ENCODE measurements at regions of chr17 and their contacts with region 1.

Region 1: GRCh38 chr17:72120642-72121163 is at the start of gene SOX9:
- DNase-seq: peak; percentile 77 to 85
- H3K4me3 ChIP-seq: peak within 1 kb of the TSS; percentile 57 to 93 (median 72)
- H3K27ac ChIP-seq: no peak within 1 kb of the TSS
- H3K4me1 ChIP-seq: peaks cover 0 to 29% (median 21%) of the 10 kb centered on the region in 4 experiments; a peak in 6 of 7 replicates
- H3K27me3 ChIP-seq: peaks cover 31 to 68% (median 56%) of the 10 kb centered on the region in 4 experiments
- CTCF ChIP-seq: no peak
- EP300 ChIP-seq: no peak
- POLR2A ChIP-seq: peak in 1 of 2 experiments; percentile 80; a peak in 2 of 3 replicates
- RAD21 ChIP-seq: peak in 1 of 2 experiments; percentile 1; a peak in 1 of 4 replicates
- total RNA-seq, gene SOX9: 4.9 and 5.2 TPM in 2 replicates

Region 2: GRCh38 chr17:72030067-72030899 is 90.4 kb before region 1 on chr17:
- CTCF ChIA-PET with region 1: interaction called, 12 read pairs
- POLR2A ChIA-PET with region 1: no interaction called
- DNase-seq: peak; percentile 70 to 75
- H3K4me3 ChIP-seq: peak overlapping the region in 3 of 4 experiments; percentile 12 to 56 (median 25); a peak in 6 of 8 replicates
- H3K27ac ChIP-seq: no peak overlapping the region
- H3K4me1 ChIP-seq: peaks cover 0 to 6% (median 4%) of the 10 kb centered on the region in 4 experiments; a peak in 4 of 7 replicates
- H3K27me3 ChIP-seq: peaks cover 0 to 7% (median 3%) of the 10 kb centered on the region in 4 experiments; a peak in 3 of 7 replicates
- CTCF ChIP-seq: peak; percentile 24 to 51 (median 51); a peak in 3 of 4 replicates
- EP300 ChIP-seq: no peak
- POLR2A ChIP-seq: no peak
- RAD21 ChIP-seq: peak; percentile 18 to 30; a peak in 1 of 4 replicates

Region 3: DNA sequence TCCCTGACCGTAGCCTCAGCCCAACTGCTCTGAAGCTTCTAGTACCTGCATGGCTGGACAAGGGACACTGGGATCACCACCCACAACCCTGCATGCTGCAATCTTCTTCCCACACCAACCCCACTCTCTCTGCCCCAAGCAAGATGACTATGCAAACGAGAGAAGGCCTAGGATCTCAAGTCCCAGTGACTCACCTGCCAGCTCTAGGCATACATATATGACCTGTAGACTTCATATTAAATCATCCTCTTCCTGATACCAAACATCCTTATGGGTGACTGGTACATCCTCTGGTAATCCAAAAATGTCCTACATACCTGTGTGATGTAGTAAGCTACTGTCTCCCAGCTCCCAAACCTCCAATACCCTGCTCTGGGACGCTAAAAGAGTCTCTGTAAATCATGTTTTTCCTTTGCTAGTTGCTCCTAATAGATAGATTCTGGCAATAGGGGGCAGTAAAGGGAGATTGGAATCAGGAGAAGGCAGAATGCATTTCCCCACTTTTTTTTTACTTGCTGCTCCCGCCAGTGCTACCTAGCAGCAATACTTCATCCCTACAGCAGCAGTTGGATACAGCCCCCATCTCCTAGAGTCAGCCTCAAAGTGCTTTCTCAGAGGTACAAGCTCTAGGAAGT is 43.3 kb before region 1 on chr17:
- CTCF ChIA-PET with region 1: interaction called, 11 read pairs
- POLR2A ChIA-PET with region 1: interaction called, 3 read pairs
- DNase-seq: no peak
- H3K4me3 ChIP-seq: no peak overlapping the region
- H3K27ac ChIP-seq: no peak overlapping the region
- H3K4me1 ChIP-seq: no peaks in the 10 kb centered on the region
- H3K27me3 ChIP-seq: no peaks in the 10 kb centered on the region
- CTCF ChIP-seq: peak in 2 of 3 experiments; percentile 14 to 51; a peak in 2 of 4 replicates
- EP300 ChIP-seq: no peak
- POLR2A ChIP-seq: no peak
- RAD21 ChIP-seq: peak; percentile 36 to 44

Region 4: DNA sequence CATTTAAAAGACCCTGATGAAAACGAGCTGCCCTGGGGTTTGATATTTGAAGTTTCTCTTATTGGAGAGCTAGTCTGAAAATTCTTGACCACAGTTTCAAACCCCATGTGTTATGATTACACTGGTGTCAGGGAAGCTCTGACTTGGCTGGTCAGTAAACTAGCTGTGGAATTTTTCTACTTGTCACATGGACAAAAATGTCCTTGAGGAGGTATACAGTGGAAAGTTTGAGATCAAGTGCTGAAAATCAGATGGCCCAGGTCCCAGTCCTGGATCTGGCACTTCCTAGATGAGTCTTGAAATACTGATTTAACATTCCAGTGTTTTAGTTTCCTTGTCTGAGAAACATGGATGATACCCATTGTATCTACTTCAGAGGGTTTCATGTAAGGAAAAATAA is 30.6 kb before region 1 on chr17:
- CTCF ChIA-PET with region 1: interaction called, 10 read pairs
- POLR2A ChIA-PET with region 1: no interaction called
- DNase-seq: no peak
- H3K4me3 ChIP-seq: no peak overlapping the region
- H3K27ac ChIP-seq: no peak overlapping the region
- H3K4me1 ChIP-seq: no peaks in the 10 kb centered on the region
- H3K27me3 ChIP-seq: no peaks in the 10 kb centered on the region
- CTCF ChIP-seq: no peak
- EP300 ChIP-seq: no peak
- POLR2A ChIP-seq: no peak
- RAD21 ChIP-seq: no peak

Region 5: GRCh38 chr17:72151565-72152391 is 31.1 kb after region 1 on chr17:
- CTCF ChIA-PET with region 1: interaction called, 4 read pairs
- POLR2A ChIA-PET with region 1: interaction called, 15 read pairs
- DNase-seq: peak in 1 of 2 experiments; percentile 53
- H3K4me3 ChIP-seq: peak overlapping the region in 3 of 4 experiments; percentile 16 to 48 (median 17); a peak in 4 of 8 replicates
- H3K27ac ChIP-seq: peak overlapping the region; percentile 92
- H3K4me1 ChIP-seq: peaks cover 5 to 19% (median 11%) of the 10 kb centered on the region in 4 experiments; a peak in 4 of 7 replicates
- H3K27me3 ChIP-seq: no peaks in the 10 kb centered on the region
- CTCF ChIP-seq: no peak
- EP300 ChIP-seq: no peak
- POLR2A ChIP-seq: peak in 1 of 2 experiments; percentile 66; a peak in 1 of 3 replicates
- RAD21 ChIP-seq: no peak; a peak in 1 of 4 replicates

Region 6: DNA sequence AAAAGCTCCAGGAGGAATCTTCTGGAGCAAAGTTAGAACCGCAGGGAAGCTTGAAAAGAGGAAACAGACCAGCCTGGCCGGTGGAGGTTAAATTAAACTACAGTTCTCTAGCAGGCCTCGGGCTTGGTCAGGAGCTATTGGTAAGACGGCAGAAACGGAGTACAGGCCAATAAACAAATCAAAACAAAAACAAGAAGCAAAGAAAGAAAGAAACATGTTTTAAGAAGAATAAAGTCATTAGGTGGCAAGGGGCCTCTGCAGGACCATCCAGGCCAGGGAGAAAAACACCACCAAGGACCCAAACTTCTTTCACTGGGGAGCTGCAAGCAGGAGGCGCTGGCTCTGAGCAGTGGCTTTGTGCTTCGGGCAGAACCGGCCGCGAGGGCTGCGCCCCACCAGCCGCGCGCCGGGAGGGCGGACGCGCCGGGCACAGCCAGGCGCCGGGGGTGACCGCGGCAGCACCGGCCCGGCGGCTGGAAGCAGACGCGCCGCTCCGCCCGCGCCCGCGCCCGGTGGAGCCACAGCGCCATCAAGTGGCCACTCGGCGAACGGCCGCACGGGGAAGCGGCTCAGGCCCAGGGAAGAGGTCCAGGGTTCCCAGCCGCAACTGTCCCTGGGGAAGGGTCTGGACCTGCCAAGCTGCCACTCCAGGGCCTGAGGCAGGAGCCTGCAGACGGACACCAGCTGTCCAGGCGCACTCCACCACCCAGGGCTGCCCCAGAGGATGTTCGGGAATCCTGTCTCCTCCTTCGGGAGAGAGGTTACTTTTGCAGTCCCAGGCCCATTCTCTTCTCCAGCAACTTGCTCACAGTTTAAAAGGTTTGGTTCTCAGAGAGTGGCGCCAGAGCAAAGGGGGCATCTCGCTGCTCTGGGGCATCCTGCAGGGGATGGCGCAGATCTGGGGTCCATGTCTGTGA is 419.5 kb after region 1 on chr17:
- CTCF ChIA-PET with region 1: interaction called, 11 read pairs
- POLR2A ChIA-PET with region 1: no interaction called
- DNase-seq: peak in 1 of 2 experiments; percentile 98
- H3K4me3 ChIP-seq: peak overlapping the region in 1 of 4 experiments; percentile 44; a peak in 2 of 8 replicates
- H3K27ac ChIP-seq: no peak overlapping the region
- H3K4me1 ChIP-seq: peaks cover 7 to 16% (median 10%) of the 10 kb centered on the region in 4 experiments
- H3K27me3 ChIP-seq: no peaks in the 10 kb centered on the region
- CTCF ChIP-seq: peak; percentile 84 to 90 (median 87)
- EP300 ChIP-seq: peak in 1 of 2 experiments; percentile 25; a peak in 1 of 3 replicates
- POLR2A ChIP-seq: no peak
- RAD21 ChIP-seq: peak; percentile 91

Measured in H1 (cell line).